ENCODE measurements at regions of chr19 and their contacts with region 1.

Region 1: GRCh38 chr19:57245959-57246358 is 5.5 kb downstream of the ZNF805 start:
- DNase-seq: no peak
- H3K4me3 ChIP-seq: no peak overlapping the region
- H3K27ac ChIP-seq: no peak overlapping the region
- H3K4me1 ChIP-seq: peaks cover 9% of the 10 kb centered on the region
- H3K27me3 ChIP-seq: no peaks in the 10 kb centered on the region
- CTCF ChIP-seq: no peak

Region 2: GRCh38 chr19:57161985-57162539 is 83.9 kb before region 1 on chr19:
- CTCF ChIA-PET with region 1: no interaction called
- POLR2A ChIA-PET with region 1: interaction called, 15 read pairs
- intact Hi-C with region 1: no loop called
- DNase-seq: no peak
- H3K4me3 ChIP-seq: no peak overlapping the region
- H3K27ac ChIP-seq: no peak overlapping the region
- H3K4me1 ChIP-seq: no peaks in the 10 kb centered on the region
- H3K27me3 ChIP-seq: no peaks in the 10 kb centered on the region
- CTCF ChIP-seq: no peak

Measured in A673 (cell line).